ENCODE measurements at regions of chr21 and their contacts with region 1.

Region 1: GRCh38 chr21:39388038-39388810 is 39.3 kb upstream of the HMGN1 start:
- DNase-seq: peak; percentile 93 to 96
- ATAC-seq: peak; percentile 70 to 85 (median 80)
- H3K4me3 ChIP-seq: peak overlapping the region; percentile 65
- H3K27ac ChIP-seq: peak overlapping the region; percentile 66
- H3K4me1 ChIP-seq: peaks cover 18% of the 10 kb centered on the region
- H3K27me3 ChIP-seq: no peaks in the 10 kb centered on the region
- CTCF ChIP-seq: peak; percentile 88

Region 2: GRCh38 chr21:39183237-39184007 is 204.8 kb before region 1 on chr21 and contains the start of gene PSMG1:
- intact Hi-C with region 1: loop called in 1 of 2 experiments (anchors 10 kb)
- DNase-seq: peak; percentile 96 to 97
- ATAC-seq: peak; percentile 96 to 97 (median 96)
- H3K4me3 ChIP-seq: peak within 1 kb of the TSS; percentile 77
- H3K27ac ChIP-seq: peak within 1 kb of the TSS; percentile 92
- H3K4me1 ChIP-seq: peaks cover 24% of the 10 kb centered on the region
- H3K27me3 ChIP-seq: no peaks in the 10 kb centered on the region
- CTCF ChIP-seq: no peak
- total RNA-seq, gene PSMG1: 20.5 to 50.3 (median 38.3) TPM

Region 3: GRCh38 chr21:39313571-39314142 is 74.6 kb before region 1 on chr21 and contains the start of gene BRWD1:
- intact Hi-C with region 1: loop called (anchors 2 to 5 kb)
- DNase-seq: peak; percentile 86 to 93
- ATAC-seq: peak; percentile 82 to 88 (median 86)
- H3K4me3 ChIP-seq: peak within 1 kb of the TSS; percentile 97
- H3K27ac ChIP-seq: peak within 1 kb of the TSS; percentile 98
- H3K4me1 ChIP-seq: peaks cover 22% of the 10 kb centered on the region
- H3K27me3 ChIP-seq: no peaks in the 10 kb centered on the region
- CTCF ChIP-seq: peak; percentile 42
- total RNA-seq, gene BRWD1: 30.2 to 33.0 (median 32.0) TPM

Region 4: GRCh38 chr21:39349211-39350093 is 38.8 kb before region 1 on chr21:
- intact Hi-C with region 1: loop called (anchors 2 to 5 kb)
- DNase-seq: peak; percentile 94 to 96
- ATAC-seq: peak; percentile 96 to 98 (median 98)
- H3K4me3 ChIP-seq: peak overlapping the region; percentile 88
- H3K27ac ChIP-seq: peak overlapping the region; percentile 85
- H3K4me1 ChIP-seq: peaks cover 13% of the 10 kb centered on the region
- H3K27me3 ChIP-seq: no peaks in the 10 kb centered on the region
- CTCF ChIP-seq: no peak

Region 5: GRCh38 chr21:39445321-39446269 is 57.4 kb after region 1 on chr21 and contains the start of gene LCA5L:
- intact Hi-C with region 1: loop called in 1 of 2 experiments (anchors 10 kb)
- DNase-seq: peak; percentile 91 to 96
- ATAC-seq: peak; percentile 92 to 96 (median 93)
- H3K4me3 ChIP-seq: peak within 1 kb of the TSS; percentile 77
- H3K27ac ChIP-seq: peak within 1 kb of the TSS; percentile 95
- H3K4me1 ChIP-seq: peaks cover 31% of the 10 kb centered on the region
- H3K27me3 ChIP-seq: no peaks in the 10 kb centered on the region
- CTCF ChIP-seq: no peak
- total RNA-seq, gene LCA5L: 2.3 to 5.3 (median 3.4) TPM

Measured in psoas muscle (tissue), 8 donors.